Mammary epithelial cell (primary cell): ENCODE measurements at regions of chr7 and their contacts with region 1.

Region 1: DNA sequence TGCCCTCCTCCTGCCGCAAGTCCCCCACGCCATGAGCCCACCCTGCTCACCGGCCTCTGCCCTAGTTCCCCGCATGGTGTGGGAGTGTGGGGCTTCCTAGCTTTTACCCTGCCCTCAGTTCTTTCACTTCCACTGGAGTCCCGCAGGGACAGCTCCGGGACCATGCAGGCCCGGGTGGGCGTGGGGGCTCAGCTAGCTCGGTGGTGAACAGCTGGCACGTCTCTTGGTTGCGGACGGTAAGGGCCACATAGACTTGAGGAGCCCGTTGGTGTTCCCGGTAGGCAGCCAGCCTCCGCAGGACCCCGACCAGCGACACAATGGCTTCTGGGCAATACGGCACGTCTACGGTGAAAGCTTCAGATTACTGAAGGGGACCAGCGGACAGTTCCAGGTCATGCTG is 108.9 kb upstream of the CCZ1B start:
- DNase-seq: no peak
- H3K4me3 ChIP-seq: no peak overlapping the region
- H3K27ac ChIP-seq: no peak overlapping the region
- H3K4me1 ChIP-seq: no peaks in the 10 kb centered on the region
- H3K27me3 ChIP-seq: no peaks in the 10 kb centered on the region
- CTCF ChIP-seq: no peak

Region 2: DNA sequence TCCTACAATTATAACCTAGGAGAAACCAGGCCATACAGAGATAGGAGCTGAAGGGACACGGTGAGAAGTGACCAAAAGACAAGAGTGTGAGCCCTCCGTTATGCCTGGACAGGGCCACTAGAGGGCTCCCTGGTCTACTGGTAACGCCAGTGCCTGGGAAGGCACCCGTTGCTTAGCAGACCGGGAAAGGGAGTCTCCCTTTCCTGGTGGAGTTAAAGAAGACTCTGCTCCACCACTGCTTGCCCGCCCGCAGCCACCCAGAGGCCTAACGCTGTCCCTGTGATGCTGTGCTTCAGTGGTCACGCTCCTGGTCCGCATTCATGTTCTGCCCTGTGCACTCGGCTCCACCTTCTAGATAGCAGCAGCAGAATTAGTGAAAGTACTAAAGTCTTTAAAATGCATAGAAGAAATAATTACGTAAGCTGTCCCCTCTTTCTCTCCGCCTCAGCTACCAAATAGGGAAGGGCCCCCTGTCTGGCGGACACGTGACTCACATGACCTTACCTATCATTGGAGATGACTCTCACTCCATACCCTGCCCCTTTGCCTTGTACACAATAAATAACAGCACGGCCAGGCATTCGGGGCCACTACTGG is 418.5 kb before region 1 on chr7:
- CTCF ChIA-PET with region 1: no interaction called
- dilution Hi-C with region 1: no loop called
- in situ Hi-C with region 1: no loop called
- intact Hi-C with region 1: loop called (anchors 2 kb)
- DNase-seq: peak; percentile 70
- H3K4me3 ChIP-seq: peak overlapping the region in 1 of 3 experiments; percentile 0
- H3K27ac ChIP-seq: no peak overlapping the region
- H3K4me1 ChIP-seq: peaks cover 4% of the 10 kb centered on the region
- H3K27me3 ChIP-seq: no peaks in the 10 kb centered on the region
- CTCF ChIP-seq: peak; percentile 65 to 91